ENCODE measurements at regions of chr3 and their contacts with region 1.

Region 1: GRCh38 chr3:76694063-76694462 is 345.8 kb upstream of the ROBO2 start:
- DNase-seq: no peak
- ATAC-seq: no peak
- H3K4me3 ChIP-seq: no peak overlapping the region
- H3K27ac ChIP-seq: no peak overlapping the region
- H3K4me1 ChIP-seq: no peaks in the 10 kb centered on the region
- H3K27me3 ChIP-seq: no peaks in the 10 kb centered on the region
- CTCF ChIP-seq: no peak

Region 2: DNA sequence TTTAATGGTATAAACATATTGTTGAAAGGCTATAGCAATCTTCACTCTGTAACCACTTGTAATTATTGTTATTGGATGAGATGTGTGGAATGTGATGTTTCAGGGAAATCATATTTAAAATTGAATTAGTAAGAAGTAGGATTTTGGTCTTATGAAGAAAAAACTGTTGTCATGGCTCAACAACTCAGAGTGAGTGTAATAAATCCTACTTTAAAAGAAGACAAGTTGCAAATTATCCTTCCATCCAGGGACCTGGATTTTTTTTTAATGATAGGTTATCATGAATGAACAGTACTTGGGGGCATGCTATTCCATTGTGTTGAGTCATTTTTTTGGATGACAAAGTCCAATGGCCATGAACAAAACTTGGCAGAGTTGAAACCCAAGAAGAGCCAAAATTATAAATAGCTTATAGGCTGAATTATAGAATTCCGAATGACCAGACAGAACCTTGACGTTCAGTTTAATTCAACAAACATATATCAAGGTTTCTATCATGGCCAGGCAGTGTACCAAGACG is 283.2 kb before region 1 on chr3:
- intact Hi-C with region 1: no loop called
- DNase-seq: no peak
- ATAC-seq: no peak
- H3K4me3 ChIP-seq: no peak overlapping the region
- H3K27ac ChIP-seq: no peak overlapping the region
- H3K4me1 ChIP-seq: no peaks in the 10 kb centered on the region
- H3K27me3 ChIP-seq: no peaks in the 10 kb centered on the region
- CTCF ChIP-seq: no peak

Region 3: GRCh38 chr3:76638006-76638405 is 56.1 kb before region 1 on chr3:
- intact Hi-C with region 1: no loop called
- DNase-seq: no peak
- ATAC-seq: no peak
- H3K4me3 ChIP-seq: no peak overlapping the region
- H3K27ac ChIP-seq: no peak overlapping the region
- H3K4me1 ChIP-seq: no peaks in the 10 kb centered on the region
- H3K27me3 ChIP-seq: no peaks in the 10 kb centered on the region
- CTCF ChIP-seq: no peak

Region 4: DNA sequence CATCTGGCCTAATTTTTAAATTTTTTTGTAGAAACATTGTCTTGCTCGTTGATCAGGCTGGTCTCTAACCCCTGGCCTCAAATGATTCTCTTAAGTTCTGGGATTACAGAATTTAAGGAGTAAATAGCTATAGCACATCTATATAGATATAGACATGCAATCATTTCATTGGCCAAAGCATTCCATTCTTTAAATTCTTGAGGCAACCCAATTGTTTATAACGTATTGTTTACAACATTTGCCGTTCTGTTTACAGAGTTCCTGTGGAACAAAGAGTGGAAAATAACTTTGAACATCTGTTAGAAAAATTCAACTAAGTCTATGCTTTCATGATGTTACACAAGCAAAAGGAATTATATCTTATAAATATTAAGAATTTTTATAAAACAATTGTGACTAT is 140.6 kb after region 1 on chr3:
- intact Hi-C with region 1: no loop called
- DNase-seq: no peak
- ATAC-seq: no peak
- H3K4me3 ChIP-seq: no peak overlapping the region
- H3K27ac ChIP-seq: no peak overlapping the region
- H3K4me1 ChIP-seq: no peaks in the 10 kb centered on the region
- H3K27me3 ChIP-seq: no peaks in the 10 kb centered on the region
- CTCF ChIP-seq: no peak

Region 5: DNA sequence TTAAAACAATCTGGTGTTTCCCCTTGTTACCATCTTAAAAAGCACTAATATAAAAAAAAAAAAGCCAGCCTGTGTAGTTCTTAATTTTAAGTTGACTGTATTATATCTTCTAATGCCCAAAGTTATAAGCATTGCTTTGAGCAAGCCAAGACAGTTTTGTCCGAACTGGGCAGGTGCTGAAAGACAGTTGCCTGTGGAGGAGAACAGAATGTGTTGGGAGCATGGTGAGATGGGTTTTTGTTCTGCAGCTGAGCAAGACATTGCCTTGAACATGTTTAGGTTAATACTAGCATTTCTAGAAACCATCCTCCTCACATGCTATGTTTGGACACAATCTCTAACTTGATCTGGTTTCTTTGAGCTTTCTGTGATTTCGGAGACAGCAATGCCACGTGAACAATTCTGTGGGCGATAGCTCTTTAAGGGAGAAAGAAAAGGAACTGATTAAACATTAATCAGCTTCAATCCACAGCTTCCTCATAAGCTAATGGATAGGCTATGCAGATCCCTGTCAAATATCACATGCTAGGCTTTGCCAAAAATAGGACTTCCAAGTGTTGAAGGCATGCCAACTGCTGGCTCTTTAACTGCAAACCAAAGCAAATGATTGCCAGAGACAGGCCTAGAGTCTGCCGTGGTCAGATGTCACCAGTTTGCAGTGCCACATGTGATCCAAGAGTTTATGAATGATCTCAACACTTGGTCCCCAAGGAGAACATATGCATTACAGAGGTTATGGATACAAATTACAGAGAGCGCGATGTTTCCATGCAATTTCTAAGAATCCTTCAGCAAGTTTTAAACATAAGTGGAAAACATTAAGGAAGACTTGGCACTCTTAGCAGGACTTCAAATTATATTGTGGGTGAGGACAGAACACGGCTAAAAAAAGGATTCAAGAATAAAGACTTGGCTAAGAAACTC is 773.9 kb after region 1 on chr3:
- intact Hi-C with region 1: loop called in 1 of 10 experiments (anchors 5 kb)
- DNase-seq: peak in 1 of 2 donors; percentile 56
- ATAC-seq: peak; percentile 52 to 91 (median 85)
- H3K4me3 ChIP-seq: no peak overlapping the region
- H3K27ac ChIP-seq: peak overlapping the region in 1 of 10 donors; percentile 19
- H3K4me1 ChIP-seq: peaks cover 0 to 23% (median 11%) of the 10 kb centered on the region in 9 donors
- H3K27me3 ChIP-seq: no peaks in the 10 kb centered on the region
- CTCF ChIP-seq: no peak